ENCODE measurements at regions of chr10 and their contacts with region 1.

Region 1: GRCh38 chr10:128596906-128597305 is 470.7 kb upstream of the MKI67 start:
- DNase-seq: no peak
- ATAC-seq: no peak
- H3K4me3 ChIP-seq: no peak overlapping the region
- H3K27ac ChIP-seq: no peak overlapping the region
- H3K4me1 ChIP-seq: no peaks in the 10 kb centered on the region
- H3K27me3 ChIP-seq: no peaks in the 10 kb centered on the region
- CTCF ChIP-seq: no peak
- POLR2A ChIP-seq: no peak

Region 2: DNA sequence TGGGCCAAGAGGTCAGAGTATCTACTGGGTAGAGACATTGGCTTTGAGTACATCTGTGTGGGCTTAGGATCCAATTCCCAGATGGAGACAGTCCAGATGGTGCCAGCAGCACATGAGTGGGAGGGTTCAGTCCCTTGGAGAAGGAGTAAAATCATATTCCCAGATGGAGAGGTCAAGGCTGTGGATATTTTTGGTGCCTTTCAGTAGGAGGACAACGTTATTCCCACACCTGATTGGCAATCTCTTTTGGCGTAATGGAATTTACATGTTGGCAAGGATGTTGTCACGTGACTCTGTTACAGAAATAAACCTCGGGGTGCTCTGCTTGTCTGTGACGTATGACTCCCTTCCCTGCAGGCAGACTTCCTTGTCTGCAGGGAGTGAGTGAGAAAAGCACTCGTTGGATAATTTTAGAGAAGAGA is 1020.2 kb before region 1 on chr10:
- in situ Hi-C with region 1: no loop called
- intact Hi-C with region 1: no loop called
- DNase-seq: no peak
- ATAC-seq: peak in 1 of 2 donors; percentile 30
- H3K4me3 ChIP-seq: no peak overlapping the region
- H3K27ac ChIP-seq: no peak overlapping the region
- H3K4me1 ChIP-seq: peaks cover 0 to 3% of the 10 kb centered on the region in 2 donors
- H3K27me3 ChIP-seq: no peaks in the 10 kb centered on the region
- CTCF ChIP-seq: no peak
- POLR2A ChIP-seq: no peak

Region 3: GRCh38 chr10:128540781-128541761 is 55.8 kb before region 1 on chr10:
- in situ Hi-C with region 1: no loop called
- intact Hi-C with region 1: loop called (anchors 2 kb)
- DNase-seq: no peak
- ATAC-seq: no peak
- H3K4me3 ChIP-seq: peak overlapping the region; percentile 17 to 34 (median 28)
- H3K27ac ChIP-seq: no peak overlapping the region
- H3K4me1 ChIP-seq: peaks cover 6 to 14% of the 10 kb centered on the region in 2 donors
- H3K27me3 ChIP-seq: peaks cover 16 to 26% (median 24%) of the 10 kb centered on the region in 3 donors
- CTCF ChIP-seq: no peak
- POLR2A ChIP-seq: no peak

Region 4: DNA sequence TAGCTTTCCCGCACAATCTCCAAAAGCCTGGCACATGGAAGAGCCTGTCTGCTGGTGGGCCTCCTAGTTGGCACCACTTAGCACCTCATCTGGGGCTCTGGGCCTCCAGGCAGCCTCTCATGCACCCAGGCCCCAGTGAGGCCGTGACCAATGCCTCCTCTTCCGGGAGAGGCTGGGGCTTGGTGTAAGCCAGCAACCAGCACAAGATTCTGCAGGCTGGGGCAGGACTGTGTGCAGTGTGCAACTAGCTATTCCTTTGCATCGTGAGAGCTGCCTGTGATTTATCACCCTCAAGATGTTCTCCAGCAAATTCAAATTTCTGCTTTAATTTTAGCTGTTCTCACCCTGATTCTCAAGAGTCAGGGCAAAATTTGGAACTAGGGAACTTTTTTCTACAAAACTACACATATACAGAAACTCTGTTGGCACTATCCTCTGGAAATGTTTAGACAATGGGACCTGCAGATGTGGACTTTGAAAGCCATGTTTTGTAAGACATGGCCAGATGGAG is 133.1 kb after region 1 on chr10:
- in situ Hi-C with region 1: no loop called
- intact Hi-C with region 1: no loop called
- DNase-seq: no peak
- ATAC-seq: no peak
- H3K4me3 ChIP-seq: no peak overlapping the region
- H3K27ac ChIP-seq: no peak overlapping the region
- H3K4me1 ChIP-seq: no peaks in the 10 kb centered on the region
- H3K27me3 ChIP-seq: no peaks in the 10 kb centered on the region
- CTCF ChIP-seq: no peak
- POLR2A ChIP-seq: no peak

Measured in gastrocnemius medialis (tissue), 4 donors.